ENCODE measurements at regions of chr10 and their contacts with region 1.

Region 1: DNA sequence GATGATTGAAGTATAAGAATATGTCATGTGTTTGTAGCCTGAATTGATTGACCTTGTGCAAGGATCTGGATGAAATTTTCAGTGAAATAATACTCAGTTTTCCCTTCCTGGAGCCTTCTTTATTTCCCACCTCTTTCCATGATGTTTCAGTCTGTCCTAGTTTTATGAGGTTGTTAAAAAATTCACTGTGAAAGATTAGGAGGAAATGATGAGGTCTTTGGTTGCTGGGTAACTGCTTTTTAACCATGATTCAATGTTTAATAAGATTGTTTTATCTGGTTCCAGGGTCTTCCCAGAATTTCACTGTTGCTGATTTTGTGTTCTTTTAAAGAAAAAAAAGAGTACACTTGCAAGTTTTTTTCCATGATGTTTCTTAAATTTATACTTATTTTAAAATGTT is 221.5 kb downstream of the MBL2 start:
- DNase-seq: no peak
- H3K4me3 ChIP-seq: no peak overlapping the region
- H3K27ac ChIP-seq: no peak overlapping the region
- H3K4me1 ChIP-seq: no peaks in the 10 kb centered on the region
- H3K27me3 ChIP-seq: no peaks in the 10 kb centered on the region
- CTCF ChIP-seq: no peak

Region 2: GRCh38 chr10:52400564-52400963 is 150.5 kb before region 1 on chr10:
- CTCF ChIA-PET with region 1: no interaction called
- POLR2A ChIA-PET with region 1: interaction called, 10 read pairs
- intact Hi-C with region 1: no loop called
- DNase-seq: no peak
- H3K4me3 ChIP-seq: no peak overlapping the region
- H3K27ac ChIP-seq: no peak overlapping the region
- H3K4me1 ChIP-seq: 0 out of 2 replicates have a peak, but pooled peaks cover 6% of the 10 kb centered on the region
- H3K27me3 ChIP-seq: no peaks in the 10 kb centered on the region
- CTCF ChIP-seq: no peak

Region 3: DNA sequence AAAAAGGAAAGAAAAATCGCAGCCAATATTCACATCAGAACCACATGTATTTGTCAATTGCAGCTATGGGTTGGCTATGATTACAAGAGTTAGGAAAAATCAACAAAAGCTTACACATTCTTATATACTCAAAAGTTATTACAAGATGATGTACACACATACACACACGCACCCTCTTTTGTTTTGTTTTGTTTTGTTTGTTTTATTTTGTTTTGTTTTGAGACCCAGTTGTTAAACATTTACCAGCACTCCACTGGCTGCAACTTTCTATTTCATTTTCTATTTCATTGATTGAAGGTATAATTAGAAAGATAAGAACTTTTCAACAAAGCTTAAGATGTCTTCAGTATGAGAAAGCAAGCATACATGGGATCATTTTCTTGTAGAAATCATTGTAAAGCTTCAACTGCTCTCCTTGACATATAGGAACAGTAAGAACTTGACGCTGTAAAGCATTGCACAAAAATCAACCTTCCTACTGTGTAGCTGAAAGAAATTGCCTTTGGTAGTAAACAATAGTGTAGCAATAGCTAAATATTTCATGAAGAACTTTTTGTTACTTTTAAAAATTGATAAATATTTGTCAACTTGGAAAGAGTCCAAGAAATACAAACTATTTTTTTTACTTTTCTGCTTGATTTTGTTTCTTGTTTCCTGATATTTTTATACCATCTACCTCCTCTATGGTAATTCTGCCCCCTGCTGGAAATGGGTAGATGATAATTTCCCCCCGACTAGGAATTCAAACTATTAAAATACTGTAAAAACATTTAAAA is 15.6 kb after region 1 on chr10:
- CTCF ChIA-PET with region 1: no interaction called
- POLR2A ChIA-PET with region 1: no interaction called
- intact Hi-C with region 1: no loop called
- DNase-seq: peak; percentile 25 to 60
- H3K4me3 ChIP-seq: no peak overlapping the region
- H3K27ac ChIP-seq: no peak overlapping the region
- H3K4me1 ChIP-seq: peaks cover 7% of the 10 kb centered on the region
- H3K27me3 ChIP-seq: no peaks in the 10 kb centered on the region
- CTCF ChIP-seq: peak; percentile 78

Measured in PC-9 (cell line).